ENCODE measurements at regions of chr10 and their contacts with region 1.

Region 1: DNA sequence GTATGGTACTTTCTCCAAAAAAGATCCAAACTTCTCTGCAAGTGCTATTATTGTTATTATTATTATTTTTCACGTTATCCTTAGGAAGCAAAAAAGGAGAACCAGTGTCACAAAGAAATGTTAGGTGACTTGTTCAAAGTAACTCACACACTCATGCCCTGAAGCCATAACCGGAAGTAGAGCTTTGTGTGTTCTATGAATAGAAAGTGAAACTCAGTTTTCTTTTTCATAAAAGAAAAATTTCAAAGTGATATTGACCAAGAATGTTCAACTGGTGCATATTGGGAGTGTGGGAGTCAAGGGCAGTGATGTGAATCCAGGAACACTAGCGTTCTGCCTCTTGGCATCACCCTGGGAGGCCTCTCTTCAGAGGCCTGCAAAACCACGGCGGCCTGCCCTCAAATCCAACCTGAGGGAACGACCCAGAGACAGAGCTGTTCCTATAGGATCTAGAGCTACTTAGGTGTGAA is 106.1 kb downstream of the PRKCQ start:
- DNase-seq: peak; percentile 36
- H3K4me3 Mint-ChIP-seq: peak overlapping the region; percentile 71
- H3K27ac Mint-ChIP-seq: peak overlapping the region; percentile 89
- H3K4me1 Mint-ChIP-seq: peaks cover 53% of the 10 kb centered on the region
- H3K27me3 Mint-ChIP-seq: no peaks in the 10 kb centered on the region

Region 2: DNA sequence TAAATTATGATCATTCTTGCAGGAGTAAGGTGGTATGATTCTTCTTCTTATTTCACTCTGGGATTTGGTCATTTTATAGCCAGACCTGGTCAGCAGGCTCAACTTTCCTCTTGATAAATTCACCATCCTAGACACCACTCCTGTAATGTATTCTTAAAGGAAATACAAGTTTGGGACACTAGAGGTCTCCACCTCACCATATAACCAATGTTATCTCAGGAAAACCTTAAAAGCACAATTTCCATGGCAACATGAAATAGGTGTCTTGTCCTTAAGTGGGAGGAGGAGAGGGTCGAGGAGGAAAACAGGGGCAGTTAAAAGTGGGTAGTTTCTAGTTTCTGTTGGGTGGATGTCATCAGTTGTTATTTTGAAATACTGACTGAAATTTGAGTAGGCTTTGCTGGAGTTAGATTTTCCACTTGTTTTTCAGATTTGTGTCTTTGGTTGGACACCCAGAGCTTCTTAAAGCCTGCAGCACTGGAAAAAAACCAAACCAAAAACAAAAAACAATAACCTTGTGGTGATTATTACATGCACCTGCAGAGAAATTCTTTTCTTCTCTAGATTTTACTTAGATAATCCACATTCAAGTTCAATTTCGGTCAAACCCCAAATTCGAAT is 56.9 kb before region 1 on chr10:
- CTCF ChIA-PET with region 1: no interaction called
- intact Hi-C with region 1: loop called (anchors 5 kb)
- DNase-seq: no peak
- H3K4me3 Mint-ChIP-seq: no peak overlapping the region
- H3K27ac Mint-ChIP-seq: no peak overlapping the region
- H3K4me1 Mint-ChIP-seq: no peaks in the 10 kb centered on the region
- H3K27me3 Mint-ChIP-seq: no peaks in the 10 kb centered on the region

Region 3: GRCh38 chr10:6491841-6492609 is 18.1 kb after region 1 on chr10:
- CTCF ChIA-PET with region 1: interaction called, 11 read pairs
- intact Hi-C with region 1: loop called (anchors 1 kb)
- DNase-seq: peak; percentile 59
- H3K4me3 Mint-ChIP-seq: peak overlapping the region; percentile 68
- H3K27ac Mint-ChIP-seq: peak overlapping the region; percentile 91
- H3K4me1 Mint-ChIP-seq: peaks cover 31% of the 10 kb centered on the region
- H3K27me3 Mint-ChIP-seq: no peaks in the 10 kb centered on the region

Region 4: DNA sequence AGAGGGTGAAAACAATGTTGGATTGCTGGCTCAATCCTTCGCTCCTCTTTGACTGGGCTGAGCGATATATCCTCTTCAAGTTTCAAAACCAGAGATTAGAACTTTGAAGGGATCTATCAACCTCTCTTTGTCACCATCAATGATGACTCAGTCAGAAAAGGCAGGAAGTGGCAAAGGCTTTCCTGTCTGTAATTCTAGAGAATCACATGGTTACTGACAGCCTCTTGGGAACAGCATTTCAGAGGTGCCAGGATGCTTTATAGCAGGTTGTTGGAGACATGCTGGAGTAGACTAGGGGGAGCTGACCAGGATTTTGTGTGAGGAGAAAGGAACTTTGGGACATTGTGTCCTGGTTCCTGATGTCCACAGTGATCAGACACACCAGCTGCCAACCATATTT is 24.8 kb after region 1 on chr10:
- CTCF ChIA-PET with region 1: interaction called, 11 read pairs
- intact Hi-C with region 1: no loop called
- DNase-seq: peak; percentile 67
- H3K4me3 Mint-ChIP-seq: peak overlapping the region; percentile 20
- H3K27ac Mint-ChIP-seq: peak overlapping the region; percentile 85
- H3K4me1 Mint-ChIP-seq: peaks cover 47% of the 10 kb centered on the region
- H3K27me3 Mint-ChIP-seq: no peaks in the 10 kb centered on the region

Region 5: GRCh38 chr10:6507311-6507710 is 33.4 kb after region 1 on chr10:
- CTCF ChIA-PET with region 1: interaction called, 3 read pairs
- intact Hi-C with region 1: loop called (anchors 2 kb)
- DNase-seq: peak; percentile 80
- H3K4me3 Mint-ChIP-seq: peak overlapping the region; percentile 7
- H3K27ac Mint-ChIP-seq: peak overlapping the region; percentile 90
- H3K4me1 Mint-ChIP-seq: peaks cover 73% of the 10 kb centered on the region
- H3K27me3 Mint-ChIP-seq: no peaks in the 10 kb centered on the region

Region 6: GRCh38 chr10:6530211-6530840 is 56.4 kb after region 1 on chr10:
- CTCF ChIA-PET with region 1: interaction called, 3 read pairs
- intact Hi-C with region 1: loop called (anchors 1 kb)
- DNase-seq: peak; percentile 92
- H3K4me3 Mint-ChIP-seq: peak overlapping the region; percentile 78
- H3K27ac Mint-ChIP-seq: peak overlapping the region; percentile 90
- H3K4me1 Mint-ChIP-seq: peaks cover 80% of the 10 kb centered on the region
- H3K27me3 Mint-ChIP-seq: no peaks in the 10 kb centered on the region

Region 7: DNA sequence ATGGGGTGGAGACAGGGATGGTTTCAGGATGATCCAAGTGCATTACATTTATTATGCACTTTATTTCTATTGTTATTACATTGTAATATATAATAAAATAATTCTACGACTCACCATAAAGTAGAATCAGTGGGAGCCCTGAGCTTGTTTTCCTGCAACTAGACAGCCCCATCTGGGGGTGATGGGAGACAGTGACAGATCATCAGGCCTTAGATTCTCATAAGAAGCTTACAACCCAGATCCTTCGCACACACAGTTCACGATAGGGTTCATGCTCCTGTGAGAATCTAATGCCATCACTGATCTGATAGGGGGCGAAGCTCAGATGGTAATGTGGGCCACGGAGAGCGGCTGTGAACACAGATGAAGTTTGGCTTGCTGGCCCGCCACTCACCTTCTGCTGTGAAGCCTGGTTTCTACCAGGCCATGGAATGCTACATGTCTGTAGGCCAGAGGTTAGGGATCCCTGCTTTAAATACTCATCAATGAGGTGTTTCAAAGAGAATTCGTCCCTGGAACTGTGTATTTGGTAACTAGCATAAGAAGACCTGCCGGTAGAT is 127.4 kb after region 1 on chr10:
- CTCF ChIA-PET with region 1: no interaction called
- intact Hi-C with region 1: loop called (anchors 1 kb)
- DNase-seq: peak; percentile 66
- H3K4me3 Mint-ChIP-seq: peak overlapping the region; percentile 51
- H3K27ac Mint-ChIP-seq: peak overlapping the region; percentile 88
- H3K4me1 Mint-ChIP-seq: peaks cover 71% of the 10 kb centered on the region
- H3K27me3 Mint-ChIP-seq: no peaks in the 10 kb centered on the region

Measured in activated naive CD4-positive, alpha-beta T cell treated with anti-CD3 and anti-CD28 coated beads for 36 hours (primary cell).